Activated CD4-positive, alpha-beta T cell treated with anti-CD3 and anti-CD28 coated beads for 36 hours (primary cell): ENCODE measurements at regions of chr19 and their contacts with region 1.

Region 1: GRCh38 chr19:49085020-49085867 is at the start of gene SNRNP70:
- DNase-seq: peak; percentile 99
- ATAC-seq: peak; percentile 99
- H3K4me3 Mint-ChIP-seq: peak within 1 kb of the TSS; percentile 98
- H3K27ac Mint-ChIP-seq: peak within 1 kb of the TSS; percentile 96
- H3K4me1 Mint-ChIP-seq: peaks cover 31% of the 10 kb centered on the region
- H3K27me3 Mint-ChIP-seq: peaks cover 2% of the 10 kb centered on the region
- total RNA-seq, gene SNRNP70: 225 to 306 TPM

Region 2: DNA sequence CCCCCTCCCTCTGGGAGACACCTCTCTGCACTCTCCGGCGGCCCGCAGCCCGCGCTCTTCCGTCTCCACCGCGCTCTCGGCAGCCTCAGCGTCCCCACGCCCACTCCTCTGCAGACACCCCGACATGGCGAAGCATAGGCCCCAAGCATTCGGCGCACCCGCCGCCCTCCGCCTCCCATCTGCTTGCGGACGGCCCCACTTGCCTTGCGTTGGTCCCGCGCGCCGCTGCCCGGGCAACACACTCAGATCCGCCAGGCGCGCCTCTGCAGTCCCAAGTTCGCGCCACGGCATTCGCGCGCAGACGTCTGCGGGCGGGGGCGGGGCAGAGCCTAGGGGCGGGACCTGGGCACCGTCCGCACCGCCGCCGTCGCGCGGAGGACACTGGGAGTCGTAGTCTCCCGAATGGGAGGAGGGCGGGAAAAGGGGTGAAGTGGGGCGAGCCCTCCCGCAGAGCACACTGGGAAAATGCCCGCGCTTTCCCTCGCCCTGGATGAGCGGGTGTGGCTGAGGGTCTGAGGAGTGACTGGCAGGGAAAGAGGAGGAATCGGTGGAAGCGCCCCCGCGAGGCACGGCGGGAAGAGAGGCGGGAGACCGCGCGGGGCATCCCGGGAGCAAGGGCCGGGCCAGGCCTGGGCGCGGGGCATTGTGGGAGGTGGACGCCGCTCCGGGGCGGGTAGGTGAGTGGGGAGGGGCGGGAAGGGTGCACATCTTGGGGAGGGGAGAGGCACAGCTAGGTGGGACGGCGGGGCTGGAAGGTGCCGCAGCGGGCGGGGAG is 915.0 kb before region 1 on chr19 and contains the starts of genes LIG1 and ZSWIM9:
- CTCF ChIA-PET with region 1: no interaction called
- POLR2A ChIA-PET with region 1: no interaction called
- intact Hi-C with region 1: loop called in 1 of 2 experiments (anchors 1 kb)
- DNase-seq: peak; percentile 96
- ATAC-seq: peak; percentile 90
- H3K4me3 Mint-ChIP-seq: peak within 1 kb of the TSS; percentile 79
- H3K27ac Mint-ChIP-seq: peak within 1 kb of the TSS; percentile 95
- H3K4me1 Mint-ChIP-seq: peaks cover 30% of the 10 kb centered on the region
- H3K27me3 Mint-ChIP-seq: no peaks in the 10 kb centered on the region
- total RNA-seq, gene LIG1: 193 to 194 TPM
- total RNA-seq, gene ZSWIM9: 7.4 to 10.9 TPM

Region 3: DNA sequence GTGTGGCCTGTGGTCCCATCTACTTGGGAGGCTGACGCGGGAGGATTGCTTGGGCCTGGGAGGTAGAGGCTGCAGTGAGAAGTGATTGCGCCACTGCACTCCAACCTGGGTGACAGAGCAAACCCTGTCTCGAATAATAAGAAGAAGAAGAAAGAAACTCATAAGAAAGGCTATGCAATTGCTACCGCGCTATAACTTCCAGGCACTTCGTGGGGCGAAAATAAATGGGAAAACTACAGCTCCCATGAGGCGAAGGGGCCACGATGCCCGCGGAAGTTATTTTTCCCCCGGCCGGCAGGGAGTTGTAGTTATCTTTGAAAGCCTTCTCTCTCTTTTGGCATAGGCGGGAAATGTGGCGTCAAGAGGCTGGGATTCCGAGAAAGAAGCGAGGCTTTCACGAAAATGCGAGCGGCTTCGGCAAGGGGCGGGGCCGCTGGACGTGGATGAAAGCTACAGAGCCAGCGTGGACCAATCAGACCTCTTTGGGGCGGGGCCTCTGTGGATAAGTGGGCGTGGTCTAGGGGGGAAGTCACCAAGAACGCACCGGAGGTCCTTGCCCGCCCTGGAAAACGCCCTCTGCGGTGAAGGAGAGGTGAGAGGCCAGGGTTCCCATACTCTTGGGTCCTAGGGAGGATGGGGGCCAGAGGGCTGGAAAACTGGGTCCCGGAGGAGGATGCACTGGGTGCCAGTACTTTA is 185.3 kb before region 1 on chr19 and contains the start of gene NUCB1:
- CTCF ChIA-PET with region 1: no interaction called
- POLR2A ChIA-PET with region 1: no interaction called
- intact Hi-C with region 1: loop called in 1 of 2 experiments (anchors 1 kb)
- DNase-seq: peak; percentile 100
- ATAC-seq: peak; percentile 95
- H3K4me3 Mint-ChIP-seq: peak within 1 kb of the TSS; percentile 99
- H3K27ac Mint-ChIP-seq: peak within 1 kb of the TSS; percentile 98
- H3K4me1 Mint-ChIP-seq: peaks cover 34% of the 10 kb centered on the region
- H3K27me3 Mint-ChIP-seq: peaks cover 5% of the 10 kb centered on the region
- total RNA-seq, gene NUCB1: 115 to 118 TPM

Region 4: GRCh38 chr19:49097455-49098288 is 12.4 kb after region 1 on chr19:
- CTCF ChIA-PET with region 1: interaction called, 26 read pairs
- POLR2A ChIA-PET with region 1: interaction called, 6 read pairs
- intact Hi-C with region 1: no loop called
- DNase-seq: peak; percentile 82
- ATAC-seq: peak; percentile 86
- H3K4me3 Mint-ChIP-seq: no peak overlapping the region
- H3K27ac Mint-ChIP-seq: no peak overlapping the region
- H3K4me1 Mint-ChIP-seq: no peaks in the 10 kb centered on the region
- H3K27me3 Mint-ChIP-seq: no peaks in the 10 kb centered on the region

Region 5: DNA sequence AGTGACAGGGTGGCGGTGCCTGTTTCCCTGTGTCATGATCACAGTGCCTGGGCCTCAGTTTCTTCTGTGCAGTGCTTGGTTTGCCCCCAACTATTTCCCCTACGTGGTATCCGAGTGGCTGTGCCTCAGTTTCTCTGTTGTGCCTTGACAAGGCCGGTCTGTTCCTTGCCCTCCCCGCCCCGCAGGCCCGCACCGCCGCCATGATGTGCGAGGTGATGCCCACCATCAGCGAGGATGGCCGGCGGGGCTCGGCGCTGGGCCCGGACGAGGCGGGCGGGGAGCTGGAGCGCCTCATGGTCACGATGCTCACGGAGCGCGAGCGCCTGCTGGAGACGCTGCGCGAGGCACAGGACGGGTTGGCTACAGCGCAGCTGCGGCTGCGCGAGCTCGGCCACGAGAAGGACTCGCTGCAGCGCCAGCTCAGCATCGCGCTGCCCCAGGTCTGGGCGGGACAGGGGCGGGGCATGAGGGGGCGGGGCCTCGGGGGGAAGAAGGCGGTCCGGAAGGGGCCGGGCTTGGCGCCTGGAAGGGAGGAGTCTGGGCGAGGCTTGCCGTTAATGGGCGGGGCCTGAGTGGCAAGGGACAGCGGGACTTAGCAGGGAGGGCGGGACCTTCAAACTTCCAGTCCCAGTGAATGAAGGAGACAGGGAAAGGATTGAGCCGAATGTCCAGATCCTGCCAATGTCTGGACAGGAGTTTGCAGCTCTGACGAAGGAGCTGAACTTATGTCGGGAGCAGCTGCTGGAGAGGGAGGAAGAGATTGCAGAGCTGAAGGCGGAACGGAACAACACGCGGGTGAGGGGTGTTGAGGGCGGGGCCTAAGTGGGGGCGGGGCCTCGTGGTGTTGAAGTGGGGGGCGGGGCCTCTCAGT is 42.7 kb after region 1 on chr19:
- CTCF ChIA-PET with region 1: no interaction called
- POLR2A ChIA-PET with region 1: interaction called, 4 read pairs
- intact Hi-C with region 1: loop called in 1 of 2 experiments (anchors 1 kb)
- DNase-seq: peak; percentile 98
- ATAC-seq: peak; percentile 95
- H3K4me3 Mint-ChIP-seq: peak overlapping the region; percentile 76
- H3K27ac Mint-ChIP-seq: peak overlapping the region; percentile 92
- H3K4me1 Mint-ChIP-seq: peaks cover 11% of the 10 kb centered on the region
- H3K27me3 Mint-ChIP-seq: no peaks in the 10 kb centered on the region

Region 6: DNA sequence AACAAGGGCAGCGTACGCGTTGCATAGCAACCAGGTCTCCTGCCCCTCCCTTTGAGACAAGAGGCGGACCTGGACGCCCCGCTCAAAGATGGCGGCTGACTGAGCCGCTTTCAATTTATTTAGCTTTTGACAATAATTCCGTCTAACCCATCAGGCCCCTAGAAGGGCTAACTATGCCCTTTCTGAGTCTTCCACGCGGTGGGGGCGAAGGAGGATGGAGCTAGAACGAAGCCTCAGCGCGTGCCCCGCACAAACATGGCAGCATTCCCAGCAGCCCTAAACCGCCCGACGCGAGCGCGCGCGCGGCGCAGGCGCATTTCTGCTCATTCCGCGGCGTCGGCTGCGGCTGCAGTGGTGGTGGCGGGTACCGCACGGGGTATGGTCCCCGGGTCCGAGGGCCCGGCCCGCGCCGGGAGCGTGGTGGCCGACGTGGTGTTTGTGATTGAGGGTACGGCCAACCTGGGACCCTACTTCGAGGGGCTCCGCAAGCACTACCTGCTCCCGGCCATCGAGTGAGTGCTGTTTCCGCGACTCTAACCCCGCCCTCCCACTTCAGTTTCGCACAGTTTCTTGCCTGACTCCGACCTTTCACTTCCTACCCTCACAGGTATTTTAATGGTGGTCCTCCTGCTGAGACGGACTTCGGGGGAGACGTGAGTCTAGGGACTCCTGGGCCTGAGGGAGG is 732.9 kb after region 1 on chr19 and contains the start of gene MED25:
- CTCF ChIA-PET with region 1: no interaction called
- POLR2A ChIA-PET with region 1: no interaction called
- intact Hi-C with region 1: loop called in 1 of 2 experiments (anchors 1 kb)
- DNase-seq: peak; percentile 91
- ATAC-seq: peak; percentile 75
- H3K4me3 Mint-ChIP-seq: peak within 1 kb of the TSS; percentile 87
- H3K27ac Mint-ChIP-seq: peak within 1 kb of the TSS; percentile 99
- H3K4me1 Mint-ChIP-seq: peaks cover 26% of the 10 kb centered on the region
- H3K27me3 Mint-ChIP-seq: no peaks in the 10 kb centered on the region
- total RNA-seq, gene MED25: 39.6 to 49.9 TPM